ENCODE measurements at regions of chr1 and their contacts with region 1.

Region 1: GRCh38 chr1:172002725-172003345 is 161.5 kb downstream of the DNM3 start:
- DNase-seq: peak; percentile 39
- H3K4me3 Mint-ChIP-seq: no peak overlapping the region
- H3K27ac Mint-ChIP-seq: no peak overlapping the region
- H3K4me1 Mint-ChIP-seq: peaks cover 4% of the 10 kb centered on the region
- H3K27me3 Mint-ChIP-seq: no peaks in the 10 kb centered on the region

Region 2: GRCh38 chr1:171919891-171920887 is 82.6 kb before region 1 on chr1:
- CTCF ChIA-PET with region 1: no interaction called
- intact Hi-C with region 1: no loop called
- DNase-seq: no peak
- H3K4me3 Mint-ChIP-seq: no peak overlapping the region
- H3K27ac Mint-ChIP-seq: no peak overlapping the region
- H3K4me1 Mint-ChIP-seq: peaks cover 4% of the 10 kb centered on the region
- H3K27me3 Mint-ChIP-seq: no peaks in the 10 kb centered on the region

Region 3: GRCh38 chr1:171984850-171985485 is 17.9 kb before region 1 on chr1:
- CTCF ChIA-PET with region 1: interaction called, 18 read pairs
- intact Hi-C with region 1: no loop called
- DNase-seq: no peak
- H3K4me3 Mint-ChIP-seq: no peak overlapping the region
- H3K27ac Mint-ChIP-seq: no peak overlapping the region
- H3K4me1 Mint-ChIP-seq: no peaks in the 10 kb centered on the region
- H3K27me3 Mint-ChIP-seq: no peaks in the 10 kb centered on the region

Region 4: DNA sequence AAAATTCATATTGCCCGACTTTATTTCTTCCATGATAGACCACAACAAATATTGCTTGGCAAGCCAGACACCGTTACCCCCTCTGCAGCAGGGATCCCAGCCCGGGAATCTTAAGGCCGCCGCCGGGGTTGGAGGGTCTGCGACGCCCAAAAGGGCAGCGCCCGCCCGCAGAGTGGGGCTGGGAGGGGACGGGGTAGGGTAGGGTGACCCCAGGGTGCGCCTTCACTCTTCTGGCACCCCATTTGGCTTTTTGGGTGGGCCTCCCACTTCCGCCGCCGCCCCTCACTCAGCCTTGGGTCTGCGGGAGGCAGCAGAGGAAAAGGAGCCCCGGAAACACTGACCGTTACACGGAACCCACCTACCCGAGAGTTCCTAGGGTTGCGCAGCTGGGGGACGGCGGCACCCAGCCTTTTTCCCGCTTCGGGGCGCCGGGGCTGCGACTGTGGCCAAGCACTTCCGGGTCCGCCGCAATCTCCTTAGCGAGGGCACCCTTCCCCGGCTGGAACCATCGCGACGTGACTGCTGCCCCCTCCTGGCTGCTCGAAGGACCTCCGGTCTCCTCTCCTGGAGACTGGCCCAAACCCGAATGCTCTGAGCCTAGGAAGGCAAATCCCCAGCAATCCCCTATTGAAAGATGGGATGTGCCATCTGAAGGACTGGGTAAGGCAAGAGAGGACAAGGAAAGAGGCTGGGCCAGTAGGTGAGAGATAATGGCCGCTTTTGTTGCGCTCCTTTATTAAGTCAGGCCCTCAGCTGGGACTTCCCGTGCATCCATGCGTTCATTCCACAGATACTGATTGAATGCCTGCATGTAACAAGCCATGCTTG is 441.0 kb after region 1 on chr1 and contains the start of gene PIGC:
- CTCF ChIA-PET with region 1: interaction called, 14 read pairs
- intact Hi-C with region 1: loop called (anchors 2 kb)
- DNase-seq: peak; percentile 96
- H3K4me3 Mint-ChIP-seq: peak within 1 kb of the TSS; percentile 86
- H3K27ac Mint-ChIP-seq: peak within 1 kb of the TSS; percentile 86
- H3K4me1 Mint-ChIP-seq: peaks cover 35% of the 10 kb centered on the region
- H3K27me3 Mint-ChIP-seq: no peaks in the 10 kb centered on the region
- total RNA-seq, gene PIGC: 17.5 to 18.7 TPM

Region 5: GRCh38 chr1:172727956-172728603 is 725.2 kb after region 1 on chr1:
- CTCF ChIA-PET with region 1: no interaction called
- intact Hi-C with region 1: loop called (anchors 5 kb)
- DNase-seq: peak; percentile 71
- H3K4me3 Mint-ChIP-seq: no peak overlapping the region
- H3K27ac Mint-ChIP-seq: no peak overlapping the region
- H3K4me1 Mint-ChIP-seq: peaks cover 17% of the 10 kb centered on the region
- H3K27me3 Mint-ChIP-seq: no peaks in the 10 kb centered on the region